CD4-positive, alpha-beta memory T cell (primary cell): ENCODE measurements at regions of chr2 and their contacts with region 1.

Region 1: GRCh38 chr2:229780856-229781773 is 66.8 kb upstream of the DNER start:
- DNase-seq: peak in 4 of 5 donors; percentile 28 to 42 (median 38)
- H3K4me3 ChIP-seq: no peak overlapping the region
- H3K4me3 Mint-ChIP-seq: no peak overlapping the region
- H3K27ac ChIP-seq: no peak overlapping the region
- H3K27ac Mint-ChIP-seq: peak overlapping the region in 4 of 7 donors; percentile 4 to 33 (median 24)
- H3K4me1 ChIP-seq: peaks cover 8% of the 10 kb centered on the region
- H3K4me1 Mint-ChIP-seq: peaks cover 19 to 27% (median 24%) of the 10 kb centered on the region in 4 donors
- H3K27me3 ChIP-seq: no peaks in the 10 kb centered on the region
- H3K27me3 Mint-ChIP-seq: no peaks in the 10 kb centered on the region

Region 2: DNA sequence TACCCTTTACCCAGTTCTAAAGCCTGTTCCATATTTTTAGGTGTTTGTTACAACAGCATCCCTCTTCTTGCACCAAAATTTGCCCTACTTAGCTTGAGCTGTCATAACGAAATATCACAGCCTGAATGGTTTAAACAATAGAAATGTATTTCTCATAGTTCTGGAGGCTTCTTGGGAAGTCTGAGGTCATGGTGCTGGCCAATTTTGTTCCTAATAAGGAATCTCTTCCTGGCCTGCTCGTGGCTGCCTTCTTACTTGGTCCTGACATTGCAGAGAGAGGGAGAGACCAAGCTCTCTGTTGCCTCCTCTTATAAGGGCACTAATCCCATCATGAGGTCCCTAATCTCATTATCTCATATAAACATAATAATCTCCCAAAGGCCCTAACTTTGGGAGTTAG is 777.9 kb before region 1 on chr2:
- CTCF ChIA-PET with region 1: no interaction called
- POLR2A ChIA-PET with region 1: no interaction called
- intact Hi-C with region 1: no loop called
- DNase-seq: no peak
- H3K4me3 ChIP-seq: no peak overlapping the region
- H3K4me3 Mint-ChIP-seq: no peak overlapping the region
- H3K27ac ChIP-seq: no peak overlapping the region
- H3K27ac Mint-ChIP-seq: no peak overlapping the region
- H3K4me1 ChIP-seq: no peaks in the 10 kb centered on the region
- H3K4me1 Mint-ChIP-seq: no peaks in the 10 kb centered on the region
- H3K27me3 ChIP-seq: no peaks in the 10 kb centered on the region
- H3K27me3 Mint-ChIP-seq: no peaks in the 10 kb centered on the region

Region 3: GRCh38 chr2:229610333-229610732 is 170.8 kb before region 1 on chr2:
- CTCF ChIA-PET with region 1: no interaction called
- POLR2A ChIA-PET with region 1: no interaction called
- intact Hi-C with region 1: no loop called
- DNase-seq: no peak
- H3K4me3 ChIP-seq: no peak overlapping the region
- H3K4me3 Mint-ChIP-seq: no peak overlapping the region
- H3K27ac ChIP-seq: no peak overlapping the region
- H3K27ac Mint-ChIP-seq: no peak overlapping the region
- H3K4me1 ChIP-seq: no peaks in the 10 kb centered on the region
- H3K4me1 Mint-ChIP-seq: no peaks in the 10 kb centered on the region
- H3K27me3 ChIP-seq: no peaks in the 10 kb centered on the region
- H3K27me3 Mint-ChIP-seq: peaks cover 1% of the 10 kb centered on the region in 2 donors

Region 4: GRCh38 chr2:229703909-229704630 is 77.0 kb before region 1 on chr2:
- CTCF ChIA-PET with region 1: no interaction called
- POLR2A ChIA-PET with region 1: no interaction called
- intact Hi-C with region 1: no loop called
- DNase-seq: no peak
- H3K4me3 ChIP-seq: no peak overlapping the region
- H3K4me3 Mint-ChIP-seq: no peak overlapping the region
- H3K27ac ChIP-seq: no peak overlapping the region
- H3K27ac Mint-ChIP-seq: no peak overlapping the region
- H3K4me1 ChIP-seq: no peaks in the 10 kb centered on the region
- H3K4me1 Mint-ChIP-seq: no peaks in the 10 kb centered on the region
- H3K27me3 ChIP-seq: no peaks in the 10 kb centered on the region
- H3K27me3 Mint-ChIP-seq: peaks cover 19 to 25% of the 10 kb centered on the region in 2 donors

Region 5: DNA sequence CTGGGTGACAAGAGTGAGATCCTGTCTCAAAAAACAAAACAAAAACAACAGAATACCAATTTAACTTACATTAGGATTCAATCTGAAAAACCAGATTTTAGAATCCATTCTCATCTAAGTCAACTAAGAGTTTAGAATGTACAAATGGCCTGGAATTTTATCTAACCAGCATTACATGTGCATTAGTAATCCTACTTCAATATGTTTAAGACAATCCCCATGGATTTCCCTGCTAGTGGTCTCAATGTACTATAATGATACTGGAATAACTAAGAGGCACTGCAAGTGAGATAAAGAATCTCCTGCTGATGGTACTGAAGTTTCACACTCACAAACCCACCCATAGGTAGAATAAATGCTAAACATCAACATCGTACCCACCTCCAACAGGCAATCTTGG is 12.9 kb before region 1 on chr2:
- CTCF ChIA-PET with region 1: interaction called, 13 read pairs
- POLR2A ChIA-PET with region 1: no interaction called
- intact Hi-C with region 1: no loop called
- DNase-seq: no peak
- H3K4me3 ChIP-seq: no peak overlapping the region
- H3K4me3 Mint-ChIP-seq: no peak overlapping the region
- H3K27ac ChIP-seq: no peak overlapping the region
- H3K27ac Mint-ChIP-seq: no peak overlapping the region
- H3K4me1 ChIP-seq: no peaks in the 10 kb centered on the region
- H3K4me1 Mint-ChIP-seq: peaks cover 0 to 3% (median 0%) of the 10 kb centered on the region in 4 donors
- H3K27me3 ChIP-seq: no peaks in the 10 kb centered on the region
- H3K27me3 Mint-ChIP-seq: no peaks in the 10 kb centered on the region

Region 6: DNA sequence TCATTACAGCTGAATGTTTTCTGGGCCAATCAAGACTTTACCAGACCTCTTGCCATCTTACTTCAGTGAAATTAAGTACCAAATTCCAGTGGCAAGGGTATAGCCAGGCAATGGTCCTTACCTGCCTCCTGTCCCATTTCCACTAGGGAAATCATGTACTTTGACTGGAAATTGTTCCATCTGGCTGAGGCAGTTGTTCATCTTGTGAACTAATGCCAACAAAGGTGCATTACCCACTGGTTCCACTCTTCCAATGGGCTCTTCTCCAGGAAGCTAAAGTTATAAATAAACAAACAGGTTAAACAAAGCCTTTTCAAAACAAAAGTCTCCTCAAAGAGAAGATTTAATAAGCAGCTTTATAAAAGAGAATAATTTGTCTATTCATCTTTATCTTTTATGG is 13.9 kb after region 1 on chr2:
- CTCF ChIA-PET with region 1: interaction called, 26 read pairs
- POLR2A ChIA-PET with region 1: no interaction called
- intact Hi-C with region 1: no loop called
- DNase-seq: no peak
- H3K4me3 ChIP-seq: no peak overlapping the region
- H3K4me3 Mint-ChIP-seq: no peak overlapping the region
- H3K27ac ChIP-seq: no peak overlapping the region
- H3K27ac Mint-ChIP-seq: no peak overlapping the region
- H3K4me1 ChIP-seq: no peaks in the 10 kb centered on the region
- H3K4me1 Mint-ChIP-seq: peaks cover 2 to 13% (median 6%) of the 10 kb centered on the region in 4 donors
- H3K27me3 ChIP-seq: no peaks in the 10 kb centered on the region
- H3K27me3 Mint-ChIP-seq: no peaks in the 10 kb centered on the region

Region 7: DNA sequence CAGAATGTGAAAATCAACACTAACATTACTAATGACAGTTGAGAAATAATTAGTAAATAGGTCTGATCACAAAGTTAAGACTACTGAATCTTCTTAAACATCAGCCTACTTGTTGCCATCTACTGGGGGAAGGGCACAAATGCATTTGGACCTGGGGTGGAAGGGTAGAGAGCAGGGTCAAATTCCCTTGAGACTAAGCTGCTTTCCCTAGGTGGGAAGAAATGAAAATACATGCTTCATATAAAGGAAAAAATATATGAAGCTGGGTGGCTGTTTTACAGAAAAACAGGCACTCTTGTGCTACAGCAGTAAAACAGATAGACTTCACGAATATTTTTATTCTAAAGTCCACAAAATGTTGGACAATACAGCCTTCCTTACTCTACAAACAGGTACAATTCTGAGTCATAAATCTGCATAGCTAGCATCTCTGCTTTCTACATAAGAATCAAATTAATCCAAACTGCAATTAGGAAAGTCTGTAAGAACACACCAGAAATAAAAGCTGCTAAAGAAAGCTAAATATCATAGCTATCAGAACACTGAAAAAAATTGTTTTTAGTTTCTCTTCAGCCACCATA is 129.8 kb after region 1 on chr2:
- CTCF ChIA-PET with region 1: interaction called, 37 read pairs
- POLR2A ChIA-PET with region 1: no interaction called
- intact Hi-C with region 1: no loop called
- DNase-seq: peak in 4 of 5 donors; percentile 22 to 35 (median 30)
- H3K4me3 ChIP-seq: no peak overlapping the region
- H3K4me3 Mint-ChIP-seq: peak overlapping the region in 4 of 8 donors; percentile 17 to 43 (median 30)
- H3K27ac ChIP-seq: peak overlapping the region; percentile 2
- H3K27ac Mint-ChIP-seq: peak overlapping the region in 6 of 7 donors; percentile 28 to 78 (median 48)
- H3K4me1 ChIP-seq: peaks cover 65% of the 10 kb centered on the region
- H3K4me1 Mint-ChIP-seq: peaks cover 32 to 60% (median 43%) of the 10 kb centered on the region in 4 donors
- H3K27me3 ChIP-seq: no peaks in the 10 kb centered on the region
- H3K27me3 Mint-ChIP-seq: no peaks in the 10 kb centered on the region

Region 8: GRCh38 chr2:230068016-230068650 is 287.0 kb after region 1 on chr2:
- CTCF ChIA-PET with region 1: interaction called, 10 read pairs
- POLR2A ChIA-PET with region 1: no interaction called
- intact Hi-C with region 1: no loop called
- DNase-seq: peak in 4 of 5 donors; percentile 22 to 51 (median 32)
- H3K4me3 ChIP-seq: peak overlapping the region in 1 of 2 donors; percentile 70
- H3K4me3 Mint-ChIP-seq: peak overlapping the region; percentile 89 to 94 (median 92)
- H3K27ac ChIP-seq: no peak overlapping the region
- H3K27ac Mint-ChIP-seq: peak overlapping the region in 3 of 7 donors; percentile 12 to 67 (median 30)
- H3K4me1 ChIP-seq: peaks cover 12% of the 10 kb centered on the region
- H3K4me1 Mint-ChIP-seq: peaks cover 8 to 15% (median 10%) of the 10 kb centered on the region in 4 donors
- H3K27me3 ChIP-seq: no peaks in the 10 kb centered on the region
- H3K27me3 Mint-ChIP-seq: peaks cover 4 to 11% of the 10 kb centered on the region in 2 donors

Region 9: DNA sequence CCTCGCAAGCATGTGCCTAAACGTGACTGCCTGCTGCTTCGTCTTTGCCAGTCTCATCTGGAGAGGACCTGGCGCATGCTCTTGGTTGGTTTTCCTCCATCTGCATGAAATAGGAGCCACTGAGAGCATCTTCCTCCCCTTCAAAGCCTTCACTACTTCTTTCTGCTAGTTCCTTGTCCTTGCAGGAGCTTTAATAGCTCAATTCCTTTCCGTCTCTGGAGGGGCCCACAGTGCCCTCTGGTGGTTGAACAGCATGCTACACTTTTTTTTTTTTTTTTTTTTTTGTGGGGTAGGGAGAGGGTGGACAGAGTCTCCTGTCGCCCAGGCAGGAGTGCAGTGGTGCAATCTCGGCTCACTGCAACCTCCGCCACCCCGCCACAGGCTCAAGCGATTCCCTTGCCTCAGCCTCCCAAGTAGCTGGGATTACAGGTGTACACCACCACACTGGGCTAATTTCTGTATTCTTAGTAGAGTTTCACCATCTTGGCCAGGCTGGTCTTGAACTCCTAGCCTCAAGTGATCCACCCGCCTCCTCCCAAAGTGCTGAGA is 379.1 kb after region 1 on chr2:
- CTCF ChIA-PET with region 1: interaction called, 10 read pairs
- POLR2A ChIA-PET with region 1: no interaction called
- intact Hi-C with region 1: loop called (anchors 1 kb)
- DNase-seq: peak; percentile 46 to 52 (median 50)
- H3K4me3 ChIP-seq: no peak overlapping the region
- H3K4me3 Mint-ChIP-seq: peak overlapping the region in 2 of 8 donors; percentile 62 to 71
- H3K27ac ChIP-seq: no peak overlapping the region
- H3K27ac Mint-ChIP-seq: peak overlapping the region in 2 of 7 donors; percentile 10 to 42
- H3K4me1 ChIP-seq: peaks cover 7% of the 10 kb centered on the region
- H3K4me1 Mint-ChIP-seq: peaks cover 0 to 6% (median 2%) of the 10 kb centered on the region in 4 donors
- H3K27me3 ChIP-seq: no peaks in the 10 kb centered on the region
- H3K27me3 Mint-ChIP-seq: no peaks in the 10 kb centered on the region